AG04449 (cell line): ENCODE measurements at regions of chr16 and their contacts with region 1.

Region 1: GRCh38 chr16:89860747-89861304 is 12.6 kb upstream of the TCF25 start:
- DNase-seq: no peak
- H3K4me3 ChIP-seq: no peak overlapping the region
- CTCF ChIP-seq: peak; percentile 100

Region 2: DNA sequence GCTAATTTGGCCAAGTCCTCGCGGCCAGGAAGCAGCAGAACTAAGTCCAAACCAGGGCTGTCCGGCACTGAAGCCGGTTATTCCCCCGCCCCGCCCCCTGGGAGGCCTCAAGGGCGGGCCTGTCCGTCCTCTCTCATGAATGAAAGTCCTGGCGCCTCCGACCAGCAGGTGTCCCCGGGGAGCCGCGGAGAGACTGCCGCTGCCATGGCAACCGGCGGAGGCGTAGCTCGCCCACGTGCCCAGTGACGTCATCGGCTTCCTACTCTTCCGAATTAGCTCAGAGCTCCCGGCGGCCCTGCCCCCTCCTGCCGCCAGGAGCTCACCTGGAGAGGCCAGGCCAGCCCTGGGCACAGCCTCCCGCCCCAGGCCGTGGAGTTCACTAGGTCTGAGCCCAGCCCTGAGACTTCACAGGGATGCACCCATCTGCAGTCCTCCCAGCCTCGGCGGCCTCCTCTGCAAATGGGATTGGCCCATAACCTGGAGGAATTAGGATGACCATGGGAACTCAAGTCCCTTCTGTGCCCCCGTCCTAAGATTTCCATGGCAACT is 160.7 kb before region 1 on chr16:
- CTCF ChIA-PET with region 1: interaction called, 61 read pairs
- POLR2A ChIA-PET with region 1: no interaction called
- DNase-seq: peak; percentile 70
- H3K4me3 ChIP-seq: peak overlapping the region; percentile 83
- CTCF ChIP-seq: peak; percentile 76

Region 3: DNA sequence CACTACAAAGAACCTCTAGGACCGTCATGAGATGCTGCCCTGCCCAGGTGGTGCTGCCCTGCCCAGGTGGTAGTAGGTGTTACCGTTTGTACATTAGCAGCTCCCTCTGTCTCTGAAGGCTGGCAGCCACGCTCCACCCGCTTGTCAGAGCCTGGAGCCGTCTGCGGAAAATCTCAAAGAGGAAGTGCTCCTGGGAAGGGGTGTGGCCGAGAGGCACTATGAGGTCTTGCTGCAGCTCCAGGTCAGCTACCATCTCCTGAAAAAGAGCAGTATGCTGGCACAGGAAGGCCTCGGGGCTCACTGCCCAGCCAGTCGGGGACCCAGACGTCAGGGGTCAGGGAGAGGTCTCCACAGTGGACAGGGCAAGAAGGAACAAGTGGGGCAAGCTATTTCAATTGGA is 111.2 kb before region 1 on chr16:
- CTCF ChIA-PET with region 1: interaction called, 55 read pairs
- POLR2A ChIA-PET with region 1: no interaction called
- DNase-seq: no peak
- H3K4me3 ChIP-seq: no peak overlapping the region
- CTCF ChIP-seq: no peak

Region 4: DNA sequence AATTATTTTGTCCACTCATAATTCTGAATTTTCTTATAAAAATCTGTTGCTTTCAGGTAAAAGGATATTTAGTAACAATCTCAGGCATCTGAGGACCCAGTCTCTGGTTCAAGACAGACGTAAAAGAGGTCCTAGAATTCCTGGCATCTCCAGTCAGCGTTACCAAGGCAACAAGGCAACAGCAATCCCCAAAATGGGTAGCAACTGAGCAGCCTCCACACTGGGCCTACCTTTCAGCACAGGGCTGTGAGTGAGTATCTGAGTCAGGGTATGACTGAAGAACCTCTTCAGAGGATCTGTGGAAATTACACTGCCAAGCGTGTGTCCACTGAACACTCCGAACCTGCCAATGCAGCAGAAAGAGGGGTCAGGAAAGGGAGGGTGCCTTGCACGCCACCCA is 65.2 kb before region 1 on chr16:
- CTCF ChIA-PET with region 1: interaction called, 22 read pairs
- POLR2A ChIA-PET with region 1: no interaction called
- DNase-seq: no peak
- H3K4me3 ChIP-seq: no peak overlapping the region
- CTCF ChIP-seq: no peak

Region 5: DNA sequence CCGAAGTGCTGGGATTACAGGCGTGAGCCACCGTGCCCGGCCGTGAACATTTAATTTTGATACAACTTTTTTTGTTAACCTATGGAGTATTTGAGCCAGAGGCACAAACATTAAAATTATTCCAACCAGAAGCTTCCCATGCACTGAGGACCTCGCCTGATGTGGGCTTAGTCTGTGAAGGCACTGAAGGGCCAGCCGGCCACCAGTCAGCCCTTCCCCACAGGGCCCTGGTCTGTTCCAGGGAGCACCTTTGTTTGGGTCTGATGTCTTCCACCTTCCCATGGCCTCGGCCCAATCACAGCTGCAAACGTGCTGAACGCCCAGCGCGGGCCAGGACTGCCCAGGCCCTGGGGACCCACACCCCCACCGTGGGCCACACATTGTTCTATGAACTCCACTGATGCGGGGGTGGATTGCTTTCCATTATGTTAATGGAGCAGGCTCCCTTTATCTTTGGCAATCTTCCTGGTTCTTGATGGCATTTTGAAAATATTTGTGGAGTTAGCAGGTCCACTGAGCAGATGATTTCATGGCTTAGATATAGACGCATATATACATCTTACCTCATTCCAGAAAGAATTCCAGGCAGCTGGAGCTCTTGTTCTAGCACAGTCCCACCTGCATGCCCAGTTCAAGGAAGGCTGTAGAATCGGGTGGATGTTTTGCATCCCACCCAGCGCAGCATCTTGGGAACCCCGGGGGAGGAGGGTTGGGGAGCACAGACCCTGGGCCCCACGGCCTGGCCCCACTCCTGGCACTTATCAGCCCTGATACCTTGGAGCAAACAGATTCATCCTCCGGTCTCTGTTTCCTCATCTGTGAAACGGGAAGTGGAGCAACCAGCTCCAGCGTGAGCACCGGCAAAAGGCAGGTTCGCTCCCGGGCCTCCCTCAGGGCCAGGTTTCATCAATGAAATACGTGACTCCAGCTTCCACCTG is 18.1 kb before region 1 on chr16:
- CTCF ChIA-PET with region 1: interaction called, 55 read pairs
- POLR2A ChIA-PET with region 1: interaction called, 3 read pairs
- DNase-seq: peak; percentile 42
- H3K4me3 ChIP-seq: no peak overlapping the region
- CTCF ChIP-seq: no peak

Region 6: GRCh38 chr16:89873972-89874689 is 13.3 kb after region 1 on chr16:
- CTCF ChIA-PET with region 1: interaction called, 83 read pairs
- POLR2A ChIA-PET with region 1: interaction called, 9 read pairs
- DNase-seq: peak; percentile 69
- H3K4me3 ChIP-seq: peak overlapping the region; percentile 90
- CTCF ChIP-seq: no peak

Region 7: DNA sequence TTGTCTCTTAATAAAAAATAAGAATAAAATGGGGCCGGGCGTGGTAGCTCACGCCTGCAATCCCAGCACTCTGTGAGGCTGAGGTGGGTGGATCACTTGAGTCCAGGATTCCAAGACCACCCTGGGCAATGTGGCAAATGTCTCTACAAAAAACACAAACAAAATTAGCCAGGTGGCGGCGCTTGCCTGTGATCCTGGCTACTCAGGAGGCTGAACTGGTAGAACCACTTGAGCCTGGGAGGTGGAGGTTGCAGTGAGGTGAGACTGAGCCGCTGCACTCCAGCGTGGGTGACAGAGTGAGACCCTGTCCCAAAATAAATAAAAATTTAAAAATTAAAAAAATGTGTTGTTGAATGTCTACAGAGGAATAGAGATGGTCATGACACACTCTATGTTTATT is 84.8 kb after region 1 on chr16:
- CTCF ChIA-PET with region 1: no interaction called
- POLR2A ChIA-PET with region 1: no interaction called
- DNase-seq: no peak
- H3K4me3 ChIP-seq: no peak overlapping the region
- CTCF ChIP-seq: no peak